Activated CD4-positive, alpha-beta memory T cell treated with anti-CD3 and anti-CD28 coated beads for 36 hours (primary cell): ENCODE measurements at regions of chr7 and their contacts with region 1.

Region 1: DNA sequence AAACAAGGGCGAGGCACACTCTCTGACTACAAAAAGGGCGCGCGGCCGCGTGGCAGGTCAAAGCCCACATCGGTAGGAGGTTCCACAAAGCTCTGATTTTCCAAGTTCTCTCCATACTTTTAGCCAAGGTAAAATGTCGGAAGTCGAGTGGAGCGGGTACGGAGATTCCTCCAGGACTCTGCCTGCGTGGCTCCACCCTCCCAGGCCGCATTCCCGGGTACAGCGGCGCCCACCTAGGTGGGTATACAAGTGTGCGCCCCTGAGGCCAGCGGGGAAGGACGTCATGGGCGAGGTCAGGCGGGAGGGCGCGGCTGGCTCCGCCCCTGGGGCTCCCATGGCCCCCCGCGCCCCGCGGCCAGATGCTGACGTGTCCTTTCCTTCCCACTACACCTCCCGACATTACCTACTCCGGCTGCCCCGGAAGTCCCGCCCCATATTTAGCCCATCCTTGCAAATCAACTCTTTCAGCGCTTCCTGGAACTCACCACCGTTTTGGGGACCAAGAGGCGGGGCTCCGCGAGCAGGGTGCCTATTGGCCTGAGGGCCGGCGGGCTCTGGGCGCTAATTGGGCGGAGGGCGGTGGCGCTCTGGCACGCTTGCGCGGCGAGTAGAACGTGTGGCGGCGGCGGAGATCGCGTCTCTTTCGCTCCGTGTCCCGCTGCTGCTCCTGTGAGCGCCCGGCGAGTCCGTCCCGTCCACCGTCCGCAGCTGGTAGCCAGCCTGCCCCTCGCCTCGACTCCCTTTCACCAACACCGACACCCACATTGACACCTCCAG is at the start of gene SND1:
- DNase-seq: peak; percentile 100
- H3K4me3 Mint-ChIP-seq: peak within 1 kb of the TSS; percentile 98
- H3K27ac Mint-ChIP-seq: peak within 1 kb of the TSS; percentile 94
- H3K4me1 Mint-ChIP-seq: peaks cover 31% of the 10 kb centered on the region
- H3K27me3 Mint-ChIP-seq: no peaks in the 10 kb centered on the region
- total RNA-seq, gene SND1: 208 to 235 TPM

Region 2: DNA sequence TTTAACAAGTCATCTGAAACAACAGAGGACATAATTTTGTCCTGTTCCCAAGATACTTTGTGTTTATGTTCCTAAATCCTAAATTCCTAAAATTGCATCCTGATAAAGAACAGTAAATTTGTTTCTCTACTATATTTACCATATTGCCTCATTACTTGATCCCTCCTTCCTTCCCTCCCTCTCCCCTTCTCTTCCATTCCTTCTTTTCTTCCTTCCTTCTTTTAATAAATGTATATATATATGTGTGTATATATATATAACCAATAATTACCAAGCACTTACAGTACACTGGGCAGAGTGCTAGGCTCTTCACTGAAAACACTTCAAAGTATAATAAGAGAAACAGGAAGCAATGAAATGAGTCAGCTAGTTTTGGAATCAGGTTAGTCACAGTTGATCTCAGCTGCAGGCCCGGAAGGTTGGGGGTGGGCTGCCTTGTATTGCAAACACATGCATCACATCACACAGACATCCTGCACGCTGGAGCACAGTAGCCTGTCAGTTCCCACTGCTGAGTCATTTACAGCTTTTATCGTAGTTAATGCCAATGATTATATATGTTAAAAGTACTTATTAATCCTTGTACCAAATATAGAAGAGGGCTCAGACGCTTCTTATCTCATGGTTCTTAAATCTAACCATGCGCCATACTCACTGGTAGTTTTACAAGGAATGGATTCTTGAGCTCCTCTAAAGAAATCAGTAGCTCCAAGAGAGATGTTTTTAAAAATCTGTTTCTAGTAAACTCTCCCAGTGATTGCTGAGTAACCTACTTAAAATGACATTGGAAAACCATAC is 950.7 kb before region 1 on chr7:
- CTCF ChIA-PET with region 1: no interaction called
- POLR2A ChIA-PET with region 1: no interaction called
- intact Hi-C with region 1: loop called (anchors 5 kb)
- DNase-seq: peak; percentile 82
- H3K4me3 Mint-ChIP-seq: no peak overlapping the region
- H3K27ac Mint-ChIP-seq: no peak overlapping the region
- H3K4me1 Mint-ChIP-seq: no peaks in the 10 kb centered on the region
- H3K27me3 Mint-ChIP-seq: no peaks in the 10 kb centered on the region

Region 3: GRCh38 chr7:127404286-127405072 is 247.3 kb before region 1 on chr7:
- CTCF ChIA-PET with region 1: no interaction called
- POLR2A ChIA-PET with region 1: no interaction called
- intact Hi-C with region 1: no loop called
- DNase-seq: no peak
- H3K4me3 Mint-ChIP-seq: no peak overlapping the region
- H3K27ac Mint-ChIP-seq: peak overlapping the region; percentile 49
- H3K4me1 Mint-ChIP-seq: peaks cover 17% of the 10 kb centered on the region
- H3K27me3 Mint-ChIP-seq: no peaks in the 10 kb centered on the region

Region 4: GRCh38 chr7:127585044-127585953 is 66.4 kb before region 1 on chr7 and contains the start of gene GCC1:
- CTCF ChIA-PET with region 1: no interaction called
- POLR2A ChIA-PET with region 1: interaction called, 5 read pairs
- intact Hi-C with region 1: loop called (anchors 1 kb)
- DNase-seq: peak; percentile 96
- H3K4me3 Mint-ChIP-seq: peak within 1 kb of the TSS; percentile 88
- H3K27ac Mint-ChIP-seq: peak within 1 kb of the TSS; percentile 64
- H3K4me1 Mint-ChIP-seq: peaks cover 69% of the 10 kb centered on the region
- H3K27me3 Mint-ChIP-seq: no peaks in the 10 kb centered on the region
- total RNA-seq, gene GCC1: 14.1 to 15.0 TPM

Region 5: DNA sequence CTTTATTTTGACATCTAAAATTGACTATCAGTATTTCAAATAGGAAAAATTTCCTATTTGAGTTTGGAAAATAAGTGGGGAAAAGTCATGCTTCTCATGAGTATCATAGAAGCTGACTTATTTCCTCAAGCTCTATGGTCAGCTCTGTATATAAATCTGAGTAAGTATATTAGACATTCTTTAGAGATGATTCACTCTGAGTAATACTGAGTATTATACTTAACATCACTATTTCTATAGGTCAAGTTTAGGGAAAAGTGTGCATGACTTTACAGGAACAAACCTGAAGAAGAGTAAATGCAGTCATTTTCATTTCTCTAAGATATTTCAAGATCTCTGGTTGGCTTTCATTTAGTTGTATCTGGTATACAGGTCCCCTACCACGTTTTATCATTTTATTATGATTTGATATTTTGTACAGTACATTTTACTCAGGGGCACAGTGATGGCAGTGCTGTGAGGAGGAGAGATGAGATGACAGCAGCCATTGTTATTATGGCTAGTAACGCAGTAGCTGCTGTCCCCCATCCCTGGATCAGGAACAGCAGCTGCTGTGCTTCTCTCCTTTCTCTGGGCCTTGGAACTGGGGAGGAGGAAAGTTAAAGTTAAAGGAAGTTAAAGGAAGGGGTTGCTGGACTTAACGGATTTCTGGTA is 15.4 kb after region 1 on chr7:
- CTCF ChIA-PET with region 1: interaction called, 3 read pairs
- POLR2A ChIA-PET with region 1: interaction called, 8 read pairs
- intact Hi-C with region 1: loop called (anchors 1 kb)
- DNase-seq: no peak
- H3K4me3 Mint-ChIP-seq: peak overlapping the region; percentile 6
- H3K27ac Mint-ChIP-seq: peak overlapping the region; percentile 84
- H3K4me1 Mint-ChIP-seq: peaks cover 55% of the 10 kb centered on the region
- H3K27me3 Mint-ChIP-seq: no peaks in the 10 kb centered on the region

Region 6: GRCh38 chr7:127708788-127709187 is 57.0 kb after region 1 on chr7:
- CTCF ChIA-PET with region 1: no interaction called
- POLR2A ChIA-PET with region 1: no interaction called
- intact Hi-C with region 1: no loop called
- DNase-seq: peak; percentile 74
- H3K4me3 Mint-ChIP-seq: no peak overlapping the region
- H3K27ac Mint-ChIP-seq: no peak overlapping the region
- H3K4me1 Mint-ChIP-seq: peaks cover 5% of the 10 kb centered on the region
- H3K27me3 Mint-ChIP-seq: no peaks in the 10 kb centered on the region

Region 7: DNA sequence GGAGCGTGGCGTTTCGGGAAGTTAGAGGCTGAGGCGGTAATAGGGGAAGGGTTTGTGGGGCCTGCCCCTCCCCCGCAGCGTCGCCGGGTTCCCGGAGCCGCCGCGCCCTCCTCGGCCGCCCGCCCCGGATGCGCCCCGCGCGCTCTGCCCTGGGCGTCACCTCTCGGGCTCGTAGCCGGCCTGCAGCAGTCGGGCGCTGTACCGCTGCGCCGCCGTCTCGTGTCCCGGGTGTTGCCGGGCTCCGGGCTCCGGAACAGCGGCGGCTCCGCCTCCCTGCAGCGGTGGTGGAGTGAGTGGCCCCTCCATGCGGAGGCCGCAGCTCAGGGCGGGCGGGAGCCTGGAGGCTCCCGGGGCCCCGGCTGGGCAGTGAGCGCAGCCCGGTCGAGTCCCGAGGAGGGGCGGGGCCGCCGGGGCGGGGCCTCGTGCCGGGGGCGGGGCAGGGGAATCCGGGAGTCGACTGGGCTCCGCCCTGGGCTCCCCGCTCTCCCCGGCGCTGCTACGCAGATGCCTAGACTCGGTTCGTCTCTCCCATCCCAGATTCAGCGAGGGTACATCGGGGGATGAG is 757.9 kb after region 1 on chr7 and contains the start of gene IMPDH1:
- CTCF ChIA-PET with region 1: no interaction called
- POLR2A ChIA-PET with region 1: no interaction called
- intact Hi-C with region 1: loop called (anchors 1 kb)
- DNase-seq: peak; percentile 90
- H3K4me3 Mint-ChIP-seq: peak within 1 kb of the TSS; percentile 84
- H3K27ac Mint-ChIP-seq: peak within 1 kb of the TSS; percentile 60
- H3K4me1 Mint-ChIP-seq: peaks cover 28% of the 10 kb centered on the region
- H3K27me3 Mint-ChIP-seq: peaks cover 3% of the 10 kb centered on the region
- total RNA-seq, gene IMPDH1: 52.9 to 57.7 TPM